GM10248 (cell line): ENCODE measurements at regions of chr3 and their contacts with region 1.

Region 1: DNA sequence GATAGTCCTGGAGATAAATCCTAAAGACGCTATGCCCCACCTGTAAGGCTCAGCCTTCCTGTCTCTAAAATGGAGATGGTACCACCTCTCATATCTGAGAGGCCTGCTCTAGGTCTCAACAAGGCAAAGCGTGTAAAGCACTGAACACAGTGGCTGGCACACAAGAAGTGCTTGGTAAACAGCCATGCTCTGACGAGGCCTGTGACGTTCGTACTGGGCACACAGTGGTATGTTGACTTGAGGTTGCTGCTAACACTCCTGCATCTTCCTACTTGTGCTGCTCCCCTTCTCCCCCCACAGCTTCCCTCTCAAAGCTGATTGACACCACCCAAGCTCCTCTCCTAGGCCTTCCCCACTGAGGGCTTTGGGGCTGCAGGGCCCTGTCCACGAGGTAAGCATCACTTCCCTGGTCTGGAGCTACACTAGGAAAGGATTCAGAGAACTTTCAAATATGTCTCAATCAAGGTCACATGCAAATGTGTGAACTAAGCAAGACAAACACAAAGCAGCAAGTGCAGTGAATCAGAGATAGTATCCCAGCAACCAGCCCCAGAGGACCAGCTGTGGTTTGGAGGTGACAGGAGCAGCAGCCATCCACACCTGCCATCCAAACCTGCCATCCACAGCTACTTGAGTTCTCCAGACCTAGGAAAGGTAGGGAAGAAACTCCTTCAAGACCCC is 177.5 kb downstream of the STT3B start:
- DNase-seq: no peak
- CTCF ChIP-seq: no peak

Region 2: DNA sequence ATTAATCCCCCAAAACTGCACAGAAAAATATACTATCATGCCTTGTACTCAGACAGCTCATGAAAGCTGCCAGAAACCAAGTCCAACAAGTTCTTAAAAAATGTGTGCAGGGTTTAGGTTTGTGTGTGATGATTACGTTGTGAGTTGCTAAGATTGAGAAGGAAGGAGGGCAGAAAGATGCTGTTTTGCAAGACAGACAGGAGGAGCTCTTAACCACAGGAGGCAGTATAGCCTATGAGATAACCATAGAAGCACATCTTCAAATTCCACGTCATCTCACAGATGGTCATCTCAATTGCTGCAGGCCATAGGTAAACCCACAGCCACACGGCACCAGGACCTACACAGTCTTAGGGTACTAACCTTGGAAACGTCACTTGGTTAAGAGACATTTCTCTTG is 14.4 kb after region 1 on chr3:
- CTCF ChIA-PET with region 1: interaction called, 11 read pairs
- POLR2A ChIA-PET with region 1: no interaction called
- DNase-seq: no peak
- CTCF ChIP-seq: peak; percentile 24

Region 3: GRCh38 chr3:32106280-32106928 is 396.1 kb after region 1 on chr3 and contains the start of gene GPD1L:
- CTCF ChIA-PET with region 1: no interaction called
- POLR2A ChIA-PET with region 1: no interaction called
- DNase-seq: peak; percentile 96
- CTCF ChIP-seq: no peak